ENCODE measurements at regions of chr14 and their contacts with region 1.

Region 1: GRCh38 chr14:103385152-103385993 is at the start of gene MARK3:
- DNase-seq: peak; percentile 98
- ATAC-seq: peak; percentile 98 to 99 (median 99)
- H3K4me3 ChIP-seq: peak within 1 kb of the TSS; percentile 71 to 100 (median 92)
- H3K27ac ChIP-seq: peak within 1 kb of the TSS; percentile 80 to 99 (median 98)
- H3K4me1 ChIP-seq: peaks cover 4 to 47% (median 34%) of the 10 kb centered on the region in 9 donors
- H3K27me3 ChIP-seq: no peaks in the 10 kb centered on the region
- CTCF ChIP-seq: peak in 5 of 9 donors; percentile 13 to 48 (median 31)
- total RNA-seq, gene MARK3: 62.3 to 246 (median 72.6) TPM

Region 2: GRCh38 chr14:103333754-103334643 is 51.4 kb before region 1 on chr14 and contains the start of gene EIF5:
- intact Hi-C with region 1: loop called in 8 of 10 experiments (anchors 1 to 10 kb)
- DNase-seq: peak; percentile 98 to 100
- ATAC-seq: peak; percentile 95 to 99 (median 97)
- H3K4me3 ChIP-seq: peak within 1 kb of the TSS; percentile 70 to 98 (median 92)
- H3K27ac ChIP-seq: peak within 1 kb of the TSS; percentile 97 to 100 (median 100)
- H3K4me1 ChIP-seq: peaks cover 7 to 46% (median 33%) of the 10 kb centered on the region in 9 donors
- H3K27me3 ChIP-seq: no peaks in the 10 kb centered on the region
- CTCF ChIP-seq: peak in 4 of 9 donors; percentile 20 to 39 (median 24)
- total RNA-seq, gene EIF5: 163 to 323 (median 243) TPM

Region 3: DNA sequence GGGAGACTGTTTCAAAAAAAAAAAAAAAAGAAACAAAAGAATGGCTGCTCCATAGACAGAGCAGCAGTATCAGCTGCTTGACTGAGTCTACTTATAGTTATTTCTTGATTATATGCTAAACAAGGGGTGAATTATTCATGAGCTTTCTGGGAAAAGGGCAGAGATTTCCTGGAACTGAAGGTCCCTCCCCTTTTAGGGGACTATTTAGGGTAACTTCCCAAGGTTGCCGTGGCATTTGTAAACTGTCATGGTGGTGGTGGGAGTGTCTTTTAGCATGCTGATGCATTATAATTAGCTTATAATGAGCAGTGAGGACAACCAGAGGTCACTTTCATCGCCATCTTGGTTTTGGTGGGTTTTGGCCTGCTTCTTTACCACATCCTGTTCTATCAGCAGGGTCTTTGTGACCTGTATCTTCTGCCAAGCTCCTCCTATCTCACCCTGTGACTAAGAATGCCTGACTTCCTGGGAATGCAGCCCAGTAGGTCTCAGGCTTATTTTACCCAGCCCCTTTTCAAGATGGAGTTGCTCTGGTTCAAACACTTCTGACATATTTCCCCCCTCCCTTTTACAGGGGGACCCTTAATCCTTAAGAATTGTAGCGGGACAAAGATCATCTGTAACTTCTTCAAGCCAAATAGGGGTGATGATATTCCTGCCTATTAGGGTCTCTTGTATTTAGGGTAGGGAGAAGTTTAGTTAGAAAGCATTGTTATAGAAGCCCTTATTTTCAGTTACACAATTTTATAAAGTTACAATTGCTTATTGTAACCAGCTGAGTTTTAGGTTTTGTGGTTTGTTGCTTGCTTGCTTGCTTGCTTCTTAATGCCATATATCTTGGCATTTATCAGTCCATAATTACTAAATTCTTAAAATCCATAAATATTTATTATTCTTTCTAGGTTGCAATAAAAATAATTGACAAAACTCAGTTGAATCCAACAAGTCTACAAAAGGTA is 42.4 kb after region 1 on chr14:
- intact Hi-C with region 1: loop called in 2 of 10 experiments (anchors 5 kb)
- DNase-seq: peak in 1 of 2 donors; percentile 40
- ATAC-seq: peak in 6 of 8 donors; percentile 26 to 70 (median 61)
- H3K4me3 ChIP-seq: no peak overlapping the region
- H3K27ac ChIP-seq: peak overlapping the region in 8 of 10 donors; percentile 1 to 82 (median 35)
- H3K4me1 ChIP-seq: peaks cover 0 to 63% (median 37%) of the 10 kb centered on the region in 9 donors
- H3K27me3 ChIP-seq: no peaks in the 10 kb centered on the region
- CTCF ChIP-seq: no peak

Region 4: GRCh38 chr14:103444837-103445524 is 59.6 kb after region 1 on chr14:
- intact Hi-C with region 1: loop called in 4 of 10 experiments (anchors 5 to 10 kb)
- DNase-seq: no peak
- ATAC-seq: peak in 4 of 8 donors; percentile 47 to 84 (median 70)
- H3K4me3 ChIP-seq: no peak overlapping the region
- H3K27ac ChIP-seq: peak overlapping the region in 6 of 10 donors; percentile 5 to 52 (median 24)
- H3K4me1 ChIP-seq: peaks cover 7 to 67% (median 53%) of the 10 kb centered on the region in 9 donors
- H3K27me3 ChIP-seq: no peaks in the 10 kb centered on the region
- CTCF ChIP-seq: no peak

Region 5: GRCh38 chr14:103500148-103500990 is 115.0 kb after region 1 on chr14:
- intact Hi-C with region 1: loop called in 2 of 10 experiments (anchors 10 kb)
- DNase-seq: peak; percentile 87 to 90
- ATAC-seq: peak; percentile 74 to 95 (median 90)
- H3K4me3 ChIP-seq: no peak overlapping the region
- H3K27ac ChIP-seq: peak overlapping the region in 5 of 10 donors; percentile 5 to 61 (median 41)
- H3K4me1 ChIP-seq: peaks cover 8 to 32% (median 14%) of the 10 kb centered on the region in 9 donors
- H3K27me3 ChIP-seq: no peaks in the 10 kb centered on the region
- CTCF ChIP-seq: peak; percentile 88 to 99 (median 94)